Activated CD8-positive, alpha-beta T cell treated with anti-CD3 and anti-CD28 coated beads, Interleukin-2, amount 10 ng/mL, durations not matched to agents 7 days and 5 days (primary cell): ENCODE measurements at regions of chr19 and their contacts with region 1.

Region 1: GRCh38 chr19:41872775-41873647 is 4.1 kb upstream of the CD79A start:
- DNase-seq: peak; percentile 79
- ATAC-seq: no peak
- H3K4me3 Mint-ChIP-seq: no peak overlapping the region
- H3K27ac Mint-ChIP-seq: peak overlapping the region; percentile 94
- H3K4me1 Mint-ChIP-seq: peaks cover 93% of the 10 kb centered on the region
- H3K27me3 Mint-ChIP-seq: no peaks in the 10 kb centered on the region

Region 2: GRCh38 chr19:41883821-41884733 is 11.1 kb after region 1 on chr19:
- CTCF ChIA-PET with region 1: interaction called, 176 read pairs
- POLR2A ChIA-PET with region 1: interaction called, 241 read pairs
- DNase-seq: peak; percentile 94
- ATAC-seq: peak; percentile 78
- H3K4me3 Mint-ChIP-seq: peak overlapping the region; percentile 80
- H3K27ac Mint-ChIP-seq: peak overlapping the region; percentile 87
- H3K4me1 Mint-ChIP-seq: peaks cover 57% of the 10 kb centered on the region
- H3K27me3 Mint-ChIP-seq: no peaks in the 10 kb centered on the region

Region 3: DNA sequence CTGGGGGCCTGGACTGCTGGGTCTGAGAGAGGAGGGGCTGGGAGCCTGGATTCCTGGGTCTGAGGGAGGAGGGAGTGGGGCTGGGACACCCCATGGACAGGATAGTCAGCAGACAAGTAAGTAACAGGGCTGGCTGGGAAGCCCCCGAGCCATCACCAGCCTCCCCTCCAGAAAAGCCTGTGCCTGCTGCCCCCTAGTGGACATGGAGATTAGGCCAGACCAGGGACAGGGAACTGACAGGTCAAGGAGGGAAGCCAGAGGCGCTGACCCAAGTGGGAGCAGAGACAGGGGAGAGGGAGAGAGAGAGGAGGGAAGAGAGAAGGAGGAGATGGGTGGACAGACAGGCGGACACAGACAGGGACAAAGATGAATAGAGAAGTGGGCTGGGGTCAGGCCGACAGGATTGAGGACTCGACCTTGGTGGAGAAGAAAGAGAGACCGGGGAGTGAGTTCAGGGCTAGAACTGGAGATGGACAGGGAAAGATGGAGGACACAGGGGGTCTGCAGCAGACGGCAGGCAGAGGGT is 61.9 kb after region 1 on chr19:
- CTCF ChIA-PET with region 1: interaction called, 11 read pairs
- POLR2A ChIA-PET with region 1: no interaction called
- DNase-seq: peak; percentile 85
- ATAC-seq: peak; percentile 75
- H3K4me3 Mint-ChIP-seq: no peak overlapping the region
- H3K27ac Mint-ChIP-seq: no peak overlapping the region
- H3K4me1 Mint-ChIP-seq: peaks cover 41% of the 10 kb centered on the region
- H3K27me3 Mint-ChIP-seq: peaks cover 48% of the 10 kb centered on the region

Region 4: DNA sequence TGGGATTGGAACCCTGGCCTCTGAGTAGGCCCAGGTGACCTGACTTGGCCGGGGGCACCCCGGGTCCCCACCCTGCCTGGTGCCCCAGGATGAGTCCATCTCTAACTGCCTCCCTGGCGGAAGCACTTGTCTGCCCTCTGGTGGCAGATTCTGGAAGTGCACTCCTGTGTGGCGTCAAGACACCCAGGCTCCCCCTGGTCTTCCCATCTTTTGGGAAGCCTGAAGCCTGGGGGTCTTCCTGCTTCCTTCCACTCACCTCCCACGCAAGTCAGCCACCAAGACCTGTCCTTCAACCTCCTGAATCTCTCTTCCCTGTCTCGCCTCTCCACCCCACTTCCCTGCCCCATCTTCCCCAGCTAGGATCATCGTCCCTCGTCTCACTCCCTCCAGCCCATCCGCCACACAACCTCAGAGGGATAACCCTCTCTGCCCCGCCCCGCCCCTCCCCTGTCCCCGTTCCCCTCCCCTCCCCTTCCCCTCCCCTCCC is 78.7 kb after region 1 on chr19:
- CTCF ChIA-PET with region 1: interaction called, 42 read pairs
- POLR2A ChIA-PET with region 1: interaction called, 3 read pairs
- DNase-seq: peak; percentile 90
- ATAC-seq: peak; percentile 83
- H3K4me3 Mint-ChIP-seq: no peak overlapping the region
- H3K27ac Mint-ChIP-seq: peak overlapping the region; percentile 49
- H3K4me1 Mint-ChIP-seq: peaks cover 28% of the 10 kb centered on the region
- H3K27me3 Mint-ChIP-seq: peaks cover 3% of the 10 kb centered on the region

Region 5: GRCh38 chr19:42075616-42076379 is 202.8 kb after region 1 on chr19 and contains the start of gene ZNF574:
- CTCF ChIA-PET with region 1: no interaction called
- POLR2A ChIA-PET with region 1: no interaction called
- DNase-seq: peak; percentile 99
- ATAC-seq: peak; percentile 99
- H3K4me3 Mint-ChIP-seq: peak within 1 kb of the TSS; percentile 91
- H3K27ac Mint-ChIP-seq: peak within 1 kb of the TSS; percentile 97
- H3K4me1 Mint-ChIP-seq: peaks cover 44% of the 10 kb centered on the region
- H3K27me3 Mint-ChIP-seq: peaks cover 7% of the 10 kb centered on the region
- total RNA-seq, gene ZNF574: 14.0 to 14.3 TPM